PC-9 (cell line): ENCODE measurements at regions of chr15 and their contacts with region 1.

Region 1: GRCh38 chr15:63277038-63277892 is at the start of gene APH1B:
- DNase-seq: peak; percentile 40 to 76
- H3K4me3 ChIP-seq: peak within 1 kb of the TSS; percentile 82
- H3K27ac ChIP-seq: no peak within 1 kb of the TSS
- H3K4me1 ChIP-seq: peaks cover 16% of the 10 kb centered on the region
- H3K27me3 ChIP-seq: no peaks in the 10 kb centered on the region
- CTCF ChIP-seq: no peak
- total RNA-seq, gene APH1B: 4.9 and 5.8 TPM in 2 replicates

Region 2: GRCh38 chr15:63264688-63265302 is 12.5 kb before region 1 on chr15:
- CTCF ChIA-PET with region 1: no interaction called
- POLR2A ChIA-PET with region 1: no interaction called
- intact Hi-C with region 1: no loop called
- DNase-seq: no peak
- H3K4me3 ChIP-seq: no peak overlapping the region
- H3K27ac ChIP-seq: no peak overlapping the region
- H3K4me1 ChIP-seq: no peaks in the 10 kb centered on the region
- H3K27me3 ChIP-seq: no peaks in the 10 kb centered on the region
- CTCF ChIP-seq: no peak

Region 3: GRCh38 chr15:63381301-63382204 is 104.3 kb after region 1 on chr15 and contains the start of gene CA12:
- CTCF ChIA-PET with region 1: no interaction called
- POLR2A ChIA-PET with region 1: interaction called, 17 read pairs
- intact Hi-C with region 1: no loop called
- DNase-seq: peak in 1 of 2 experiments; percentile 21
- H3K4me3 ChIP-seq: peak within 1 kb of the TSS; percentile 43; the same call in 1 of the 2 replicates
- H3K27ac ChIP-seq: no peak within 1 kb of the TSS
- H3K4me1 ChIP-seq: peaks cover 18% of the 10 kb centered on the region
- H3K27me3 ChIP-seq: no peaks in the 10 kb centered on the region
- CTCF ChIP-seq: no peak
- total RNA-seq, gene CA12: 3.8 and 4.6 TPM in 2 replicates